ENCODE measurements at regions of chr17 and their contacts with region 1.

Region 1: GRCh38 chr17:40735016-40735415 is 20.1 kb downstream of the KRT25 start:
- DNase-seq: no peak
- ATAC-seq: no peak
- H3K4me3 ChIP-seq: no peak overlapping the region
- H3K4me3 Mint-ChIP-seq: no peak overlapping the region
- H3K27ac ChIP-seq: no peak overlapping the region
- H3K27ac Mint-ChIP-seq: no peak overlapping the region
- H3K4me1 ChIP-seq: no peaks in the 10 kb centered on the region
- H3K4me1 Mint-ChIP-seq: peaks cover 3% of the 10 kb centered on the region
- H3K27me3 ChIP-seq: peaks cover 0 to 6% (median 2%) of the 10 kb centered on the region in 4 experiments
- H3K27me3 Mint-ChIP-seq: peaks cover 15% of the 10 kb centered on the region
- CTCF ChIP-seq: no peak

Region 2: GRCh38 chr17:40542558-40543411 is 192.2 kb before region 1 on chr17:
- CTCF ChIA-PET with region 1: no interaction called
- POLR2A ChIA-PET with region 1: interaction called, 10 read pairs
- intact Hi-C with region 1: no loop called
- DNase-seq: peak; percentile 71
- ATAC-seq: peak; percentile 11
- H3K4me3 ChIP-seq: no peak overlapping the region
- H3K4me3 Mint-ChIP-seq: peak overlapping the region; percentile 63
- H3K27ac ChIP-seq: peak overlapping the region in 1 of 2 donors; percentile 30
- H3K27ac Mint-ChIP-seq: peak overlapping the region; percentile 89
- H3K4me1 ChIP-seq: peaks cover 48 to 61% of the 10 kb centered on the region in 2 donors
- H3K4me1 Mint-ChIP-seq: peaks cover 64% of the 10 kb centered on the region
- H3K27me3 ChIP-seq: no peaks in the 10 kb centered on the region
- H3K27me3 Mint-ChIP-seq: no peaks in the 10 kb centered on the region
- CTCF ChIP-seq: no peak

Measured in B cell (primary cell).